CD4-positive, alpha-beta memory T cell (primary cell): ENCODE measurements at regions of chr17 and their contacts with region 1.

Region 1: DNA sequence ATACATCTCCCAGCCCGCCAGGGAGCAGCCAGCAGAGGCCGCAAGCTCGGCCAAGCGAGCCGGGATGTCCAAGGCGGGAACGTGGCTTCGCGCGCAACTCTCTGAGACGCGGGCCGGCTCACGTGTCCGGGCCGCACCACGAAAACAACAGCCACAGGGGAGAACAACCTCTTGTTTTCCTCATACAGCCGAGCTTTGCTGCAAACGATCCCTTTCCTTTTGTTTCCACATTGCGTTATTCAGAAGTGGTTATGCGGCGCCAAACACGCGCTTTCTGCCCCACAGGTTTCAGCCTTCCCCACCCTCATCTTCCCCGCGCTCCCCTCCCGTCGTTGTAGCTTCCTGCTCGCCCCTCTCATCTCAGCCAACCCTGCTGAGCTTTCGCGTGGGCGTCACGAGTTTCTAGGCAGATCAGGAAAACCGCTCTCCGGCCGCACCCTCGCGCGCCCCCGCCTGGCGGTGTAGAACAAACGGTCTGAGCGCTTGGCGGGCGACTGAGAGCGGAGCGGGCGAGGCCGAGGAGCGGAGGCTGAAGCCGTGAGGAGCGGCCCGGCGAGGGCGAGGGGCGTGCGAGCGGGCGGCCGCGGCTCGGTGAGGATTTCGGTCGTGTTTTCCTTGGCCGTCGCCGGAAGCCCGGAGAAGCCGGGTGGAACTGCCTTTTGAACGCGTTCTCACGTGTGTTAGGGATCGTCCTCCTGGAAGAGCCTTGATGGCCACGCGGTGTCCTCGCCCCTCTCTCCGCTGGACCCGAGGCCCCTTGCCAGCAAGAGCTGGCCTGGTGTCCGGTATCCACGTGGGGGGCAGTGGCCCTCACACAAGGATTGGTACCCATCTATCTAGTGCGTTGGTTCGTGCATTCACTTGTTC is 6.6 kb upstream of the SMARCD2 start:
- DNase-seq: peak; percentile 92 to 94 (median 93)
- H3K4me3 ChIP-seq: peak overlapping the region; percentile 45 to 58
- H3K4me3 Mint-ChIP-seq: peak overlapping the region; percentile 78 to 94 (median 89)
- H3K27ac ChIP-seq: peak overlapping the region; percentile 18
- H3K27ac Mint-ChIP-seq: peak overlapping the region; percentile 72 to 100 (median 98)
- H3K4me1 ChIP-seq: peaks cover 13% of the 10 kb centered on the region
- H3K4me1 Mint-ChIP-seq: peaks cover 13 to 22% (median 18%) of the 10 kb centered on the region in 4 donors
- H3K27me3 ChIP-seq: no peaks in the 10 kb centered on the region
- H3K27me3 Mint-ChIP-seq: no peaks in the 10 kb centered on the region

Region 2: DNA sequence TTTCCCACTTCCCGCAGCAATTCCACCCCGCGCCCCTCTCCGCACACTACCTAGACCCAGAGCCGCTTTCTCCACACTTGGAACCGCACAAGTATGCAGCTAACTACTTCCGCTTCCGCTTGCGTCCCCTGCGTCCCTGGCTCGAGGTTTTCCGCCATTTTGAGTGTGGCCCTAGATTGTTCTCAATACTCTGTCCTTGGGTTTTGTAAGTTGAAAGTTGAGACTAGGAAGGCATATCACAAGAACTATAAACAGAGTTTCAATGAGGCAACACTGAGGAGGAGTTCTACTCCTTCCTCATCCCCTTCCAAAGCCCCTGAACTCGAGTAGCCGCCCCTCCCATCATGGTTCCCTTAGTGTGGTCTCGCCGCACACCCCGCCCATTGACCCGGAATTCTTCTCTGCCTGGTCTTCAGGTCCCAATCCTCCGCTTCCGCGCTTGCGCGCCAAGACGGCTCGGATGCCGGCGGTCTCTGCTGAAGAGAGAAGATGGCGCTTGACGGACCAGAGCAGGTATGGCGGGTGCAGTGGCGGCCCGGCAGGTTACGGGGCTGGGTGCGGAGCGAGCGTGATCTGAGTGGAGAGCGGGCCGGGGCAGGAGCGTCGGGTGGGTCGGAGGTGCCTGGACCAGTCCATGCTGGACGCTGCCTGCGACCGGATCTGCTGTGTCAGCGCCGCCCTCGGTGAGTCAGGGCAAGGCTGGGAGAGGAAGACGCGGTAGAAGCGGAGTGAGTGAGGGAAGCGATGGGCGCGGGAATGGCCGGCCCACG is 21.9 kb before region 1 on chr17 and contains the starts of genes FTSJ3 and PSMC5:
- CTCF ChIA-PET with region 1: interaction called, 37 read pairs
- POLR2A ChIA-PET with region 1: interaction called, 104 read pairs
- intact Hi-C with region 1: no loop called
- DNase-seq: peak; percentile 96 to 98 (median 97)
- H3K4me3 ChIP-seq: peak within 1 kb of the TSS; percentile 93
- H3K4me3 Mint-ChIP-seq: peak within 1 kb of the TSS; percentile 93 to 100 (median 98)
- H3K27ac ChIP-seq: peak within 1 kb of the TSS; percentile 90
- H3K27ac Mint-ChIP-seq: peak within 1 kb of the TSS; percentile 95 to 100 (median 100)
- H3K4me1 ChIP-seq: peaks cover 61% of the 10 kb centered on the region
- H3K4me1 Mint-ChIP-seq: peaks cover 46 to 92% (median 74%) of the 10 kb centered on the region in 4 donors
- H3K27me3 ChIP-seq: no peaks in the 10 kb centered on the region
- H3K27me3 Mint-ChIP-seq: no peaks in the 10 kb centered on the region
- total RNA-seq, gene FTSJ3: 62.1 to 62.2 TPM
- total RNA-seq, gene PSMC5: 121 TPM

Region 3: GRCh38 chr17:63834431-63835166 is 14.5 kb before region 1 on chr17:
- CTCF ChIA-PET with region 1: interaction called, 37 read pairs
- POLR2A ChIA-PET with region 1: interaction called, 104 read pairs
- intact Hi-C with region 1: no loop called
- DNase-seq: peak; percentile 51 to 82 (median 62)
- H3K4me3 ChIP-seq: no peak overlapping the region
- H3K4me3 Mint-ChIP-seq: peak overlapping the region in 1 of 8 donors; percentile 23
- H3K27ac ChIP-seq: no peak overlapping the region
- H3K27ac Mint-ChIP-seq: peak overlapping the region; percentile 75 to 89 (median 83)
- H3K4me1 ChIP-seq: peaks cover 69% of the 10 kb centered on the region
- H3K4me1 Mint-ChIP-seq: peaks cover 34 to 71% (median 49%) of the 10 kb centered on the region in 4 donors
- H3K27me3 ChIP-seq: no peaks in the 10 kb centered on the region
- H3K27me3 Mint-ChIP-seq: no peaks in the 10 kb centered on the region

Region 4: GRCh38 chr17:63859257-63859656 is 10.2 kb after region 1 on chr17:
- CTCF ChIA-PET with region 1: interaction called, 36 read pairs
- POLR2A ChIA-PET with region 1: interaction called, 7 read pairs
- intact Hi-C with region 1: no loop called
- DNase-seq: no peak
- H3K4me3 ChIP-seq: no peak overlapping the region
- H3K4me3 Mint-ChIP-seq: no peak overlapping the region
- H3K27ac ChIP-seq: no peak overlapping the region
- H3K27ac Mint-ChIP-seq: no peak overlapping the region
- H3K4me1 ChIP-seq: no peaks in the 10 kb centered on the region
- H3K4me1 Mint-ChIP-seq: no peaks in the 10 kb centered on the region
- H3K27me3 ChIP-seq: no peaks in the 10 kb centered on the region
- H3K27me3 Mint-ChIP-seq: no peaks in the 10 kb centered on the region

Region 5: DNA sequence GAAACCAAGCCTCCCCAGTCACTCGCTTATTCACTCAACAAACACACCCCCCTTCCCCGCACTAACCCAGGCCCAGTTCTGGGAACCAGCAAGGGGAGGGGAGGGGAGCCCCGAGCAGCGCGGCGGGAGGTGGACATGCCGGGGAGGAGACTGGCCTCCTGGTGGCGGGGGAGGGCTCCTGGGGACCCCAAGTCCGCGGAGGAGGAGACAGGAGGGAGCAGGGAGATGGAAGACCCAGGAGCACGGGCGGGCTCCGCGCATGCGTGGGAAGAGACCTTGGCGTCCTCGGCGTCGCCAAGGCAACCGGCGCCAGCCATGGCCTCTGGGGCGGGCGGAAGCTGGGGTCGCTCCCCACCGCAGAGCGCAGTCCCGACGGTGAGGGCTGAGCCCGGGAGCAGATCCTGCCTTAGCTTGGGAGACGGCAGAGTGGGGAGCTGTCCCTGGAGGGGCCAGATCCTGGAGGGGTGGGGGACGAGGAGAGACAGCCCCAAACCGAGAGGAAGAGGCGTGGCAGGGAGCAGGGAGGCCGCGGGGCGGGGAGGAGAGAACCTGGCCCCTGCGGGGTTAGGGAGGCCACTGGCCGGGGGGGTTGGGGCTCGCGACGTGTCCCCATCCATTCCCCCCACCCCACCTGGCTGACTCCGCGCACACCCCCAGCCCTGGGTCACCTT is 149.1 kb after region 1 on chr17 and contains the start of gene PRR29:
- CTCF ChIA-PET with region 1: no interaction called
- POLR2A ChIA-PET with region 1: no interaction called
- intact Hi-C with region 1: no loop called
- DNase-seq: peak; percentile 70 to 81 (median 75)
- H3K4me3 ChIP-seq: peak within 1 kb of the TSS; percentile 5 to 76
- H3K4me3 Mint-ChIP-seq: peak within 1 kb of the TSS; percentile 87 to 94 (median 88)
- H3K27ac ChIP-seq: peak within 1 kb of the TSS; percentile 39
- H3K27ac Mint-ChIP-seq: peak within 1 kb of the TSS; percentile 60 to 91 (median 87)
- H3K4me1 ChIP-seq: peaks cover 46% of the 10 kb centered on the region
- H3K4me1 Mint-ChIP-seq: peaks cover 32 to 69% (median 42%) of the 10 kb centered on the region in 4 donors
- H3K27me3 ChIP-seq: no peaks in the 10 kb centered on the region
- H3K27me3 Mint-ChIP-seq: no peaks in the 10 kb centered on the region
- total RNA-seq, gene PRR29: 0.19 to 1.0 TPM